Esophagus muscularis mucosa (tissue), 4 donors: ENCODE measurements at regions of chr1 and their contacts with region 1.

Region 1: DNA sequence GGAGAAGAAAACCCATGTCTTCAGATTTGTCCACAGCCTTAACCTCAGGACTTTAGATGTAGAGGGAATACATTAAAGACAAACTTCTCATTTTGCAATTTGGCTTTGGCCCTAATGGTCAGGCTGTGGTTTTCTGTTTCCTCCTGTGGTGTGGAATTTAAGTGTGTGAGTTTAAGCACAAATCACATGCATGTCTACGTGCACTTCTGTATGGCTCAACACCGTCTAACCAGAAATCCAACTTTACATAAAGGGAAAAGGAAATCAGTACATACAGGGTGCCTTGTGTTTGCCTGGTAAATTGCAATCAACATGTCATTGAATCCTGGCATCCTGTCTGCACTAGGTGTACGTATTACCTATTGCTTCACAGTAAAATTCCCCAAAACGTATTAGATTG is 1.2 kb upstream of the ZNF124 start:
- DNase-seq: no peak
- H3K4me3 ChIP-seq: no peak overlapping the region
- H3K27ac ChIP-seq: no peak overlapping the region
- H3K4me1 ChIP-seq: peaks cover 0 to 4% (median 0%) of the 10 kb centered on the region in 4 donors
- H3K27me3 ChIP-seq: no peaks in the 10 kb centered on the region
- CTCF ChIP-seq: no peak
- EP300 ChIP-seq: no peak
- POLR2A ChIP-seq: no peak

Region 2: GRCh38 chr1:246971969-246972368 is 201.0 kb before region 1 on chr1:
- intact Hi-C with region 1: no loop called
- DNase-seq: no peak
- H3K4me3 ChIP-seq: no peak overlapping the region
- H3K27ac ChIP-seq: no peak overlapping the region
- H3K4me1 ChIP-seq: no peaks in the 10 kb centered on the region
- H3K27me3 ChIP-seq: no peaks in the 10 kb centered on the region
- CTCF ChIP-seq: no peak
- EP300 ChIP-seq: no peak
- POLR2A ChIP-seq: no peak

Region 3: DNA sequence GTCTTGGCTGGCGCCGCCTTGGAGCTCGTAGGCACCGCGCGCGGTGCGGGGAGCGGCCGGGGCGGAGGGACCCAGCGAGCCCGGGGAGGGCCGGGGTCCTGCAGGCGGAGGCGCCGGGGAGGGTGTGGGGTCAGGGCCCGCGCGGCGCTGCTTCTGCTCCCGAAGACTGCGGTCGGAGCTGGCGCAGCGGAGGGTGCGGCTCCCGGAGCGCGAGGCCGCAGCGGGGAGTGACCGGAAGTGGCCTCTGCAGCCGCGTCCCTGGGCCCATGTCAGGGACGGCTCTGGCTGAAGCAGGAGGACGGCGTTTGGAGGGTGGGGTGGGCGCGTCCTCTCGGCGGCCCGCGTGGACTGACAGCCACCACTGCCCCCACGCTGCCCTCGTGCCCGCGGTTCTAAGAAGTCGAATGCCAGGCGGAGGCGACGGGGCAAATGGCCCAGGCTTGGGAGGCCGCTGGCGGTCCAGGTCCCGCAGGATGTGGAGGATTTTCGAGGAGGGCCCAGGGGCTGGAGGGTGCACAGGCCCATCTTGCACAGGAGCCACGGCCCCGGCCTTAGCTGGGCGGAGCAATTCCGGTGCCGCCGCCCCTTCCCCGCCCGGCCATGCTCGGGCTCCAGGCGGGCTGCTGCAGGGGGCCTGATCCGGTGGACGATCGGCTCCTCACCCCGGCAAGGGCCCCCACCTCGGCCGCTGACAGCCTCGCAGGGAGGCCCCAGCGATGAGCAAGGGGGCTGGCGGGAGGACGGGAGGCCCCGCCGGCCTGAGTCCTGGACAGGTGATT is 61.1 kb before region 1 on chr1:
- intact Hi-C with region 1: loop called (anchors 5 kb)
- DNase-seq: peak; percentile 88
- H3K4me3 ChIP-seq: peak overlapping the region; percentile 72 to 97 (median 86)
- H3K27ac ChIP-seq: peak overlapping the region; percentile 89 to 95 (median 92)
- H3K4me1 ChIP-seq: peaks cover 12 to 26% (median 22%) of the 10 kb centered on the region in 4 donors
- H3K27me3 ChIP-seq: no peaks in the 10 kb centered on the region
- CTCF ChIP-seq: no peak
- EP300 ChIP-seq: no peak
- POLR2A ChIP-seq: no peak

Region 4: GRCh38 chr1:247210376-247211117 is 37.6 kb after region 1 on chr1:
- intact Hi-C with region 1: loop called (anchors 2 kb)
- DNase-seq: peak; percentile 99
- H3K4me3 ChIP-seq: peak overlapping the region; percentile 85 to 96 (median 92)
- H3K27ac ChIP-seq: peak overlapping the region; percentile 81 to 93 (median 88)
- H3K4me1 ChIP-seq: peaks cover 17 to 30% (median 22%) of the 10 kb centered on the region in 4 donors
- H3K27me3 ChIP-seq: no peaks in the 10 kb centered on the region
- CTCF ChIP-seq: peak in 1 of 3 experiments; percentile 4
- EP300 ChIP-seq: no peak
- POLR2A ChIP-seq: no peak